Activated T-helper 1 cell treated with anti-CD3 and anti-CD28 coated beads, Interleukin-12 subunit alpha, Interleukin-12 subunit beta, Interleukin-2, Interleukin-4 antibody, amounts not matched to agents 30 ng/mL and 10 ng/mL and 1 ng/mL, durations not matched to agents 14 hours and 24 hours and 36 hours (primary cell): ENCODE measurements at regions of chr1 and their contacts with region 1.

Region 1: GRCh38 chr1:70487910-70488665 is 77.0 kb downstream of the CTH start:
- DNase-seq: no peak
- H3K4me3 Mint-ChIP-seq: no peak overlapping the region
- H3K27ac Mint-ChIP-seq: no peak overlapping the region
- H3K4me1 Mint-ChIP-seq: no peaks in the 10 kb centered on the region
- H3K27me3 Mint-ChIP-seq: peaks cover 15% of the 10 kb centered on the region

Region 2: GRCh38 chr1:70134148-70134547 is 353.9 kb before region 1 on chr1:
- intact Hi-C with region 1: loop called (anchors 1 kb)
- DNase-seq: no peak
- H3K4me3 Mint-ChIP-seq: no peak overlapping the region
- H3K27ac Mint-ChIP-seq: no peak overlapping the region
- H3K4me1 Mint-ChIP-seq: peaks cover 6% of the 10 kb centered on the region
- H3K27me3 Mint-ChIP-seq: peaks cover 22% of the 10 kb centered on the region

Region 3: DNA sequence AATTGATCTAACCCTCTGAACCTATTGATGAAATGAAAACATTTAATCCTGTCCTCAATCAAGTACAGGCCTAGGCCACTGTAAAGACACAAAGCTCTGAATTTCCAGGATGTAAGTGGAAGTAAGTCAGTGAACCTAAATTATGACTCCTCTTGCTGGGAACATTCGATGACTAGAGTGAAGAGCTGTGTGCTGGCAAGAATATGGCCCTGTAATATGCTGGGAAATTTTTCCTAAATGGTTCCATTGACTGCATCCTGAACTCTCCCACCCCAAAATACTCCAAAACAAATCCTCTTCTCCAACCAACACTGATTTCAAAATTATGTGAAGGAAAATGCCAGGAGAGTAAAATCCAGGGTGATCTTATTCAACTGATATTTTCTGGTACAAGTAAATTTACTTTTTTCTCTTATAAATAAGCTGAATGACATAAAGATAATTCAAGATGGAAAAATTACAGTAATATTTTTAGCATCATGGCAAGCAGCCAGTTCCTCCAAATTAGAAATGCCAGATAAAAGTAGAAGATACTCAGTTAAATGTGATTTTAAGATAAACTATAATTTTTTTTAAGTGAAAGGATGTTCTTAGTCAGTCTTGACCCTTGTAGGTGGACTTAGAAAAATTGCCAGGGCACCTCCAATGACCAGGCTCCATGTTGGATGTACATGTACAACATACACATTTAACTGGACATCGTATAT is 290.1 kb after region 1 on chr1:
- intact Hi-C with region 1: no loop called
- DNase-seq: no peak
- H3K4me3 Mint-ChIP-seq: no peak overlapping the region
- H3K27ac Mint-ChIP-seq: no peak overlapping the region
- H3K4me1 Mint-ChIP-seq: no peaks in the 10 kb centered on the region
- H3K27me3 Mint-ChIP-seq: peaks cover 2% of the 10 kb centered on the region

Region 4: GRCh38 chr1:70934194-70934961 is 446.3 kb after region 1 on chr1:
- intact Hi-C with region 1: no loop called
- DNase-seq: no peak
- H3K4me3 Mint-ChIP-seq: no peak overlapping the region
- H3K27ac Mint-ChIP-seq: no peak overlapping the region
- H3K4me1 Mint-ChIP-seq: peaks cover 9% of the 10 kb centered on the region
- H3K27me3 Mint-ChIP-seq: no peaks in the 10 kb centered on the region